Endothelial cell of umbilical vein (primary cell): ENCODE measurements at regions of chr12 and their contacts with region 1.

Region 1: GRCh38 chr12:54935235-54935951 is 49.2 kb downstream of the TESPA1 start:
- DNase-seq: peak; percentile 67
- H3K4me3 ChIP-seq: no peak overlapping the region
- H3K27ac ChIP-seq: peak overlapping the region; percentile 88
- H3K4me1 ChIP-seq: peaks cover 27% of the 10 kb centered on the region
- H3K27me3 ChIP-seq: no peaks in the 10 kb centered on the region
- CTCF ChIP-seq: no peak
- POLR2A ChIP-seq: no peak

Region 2: DNA sequence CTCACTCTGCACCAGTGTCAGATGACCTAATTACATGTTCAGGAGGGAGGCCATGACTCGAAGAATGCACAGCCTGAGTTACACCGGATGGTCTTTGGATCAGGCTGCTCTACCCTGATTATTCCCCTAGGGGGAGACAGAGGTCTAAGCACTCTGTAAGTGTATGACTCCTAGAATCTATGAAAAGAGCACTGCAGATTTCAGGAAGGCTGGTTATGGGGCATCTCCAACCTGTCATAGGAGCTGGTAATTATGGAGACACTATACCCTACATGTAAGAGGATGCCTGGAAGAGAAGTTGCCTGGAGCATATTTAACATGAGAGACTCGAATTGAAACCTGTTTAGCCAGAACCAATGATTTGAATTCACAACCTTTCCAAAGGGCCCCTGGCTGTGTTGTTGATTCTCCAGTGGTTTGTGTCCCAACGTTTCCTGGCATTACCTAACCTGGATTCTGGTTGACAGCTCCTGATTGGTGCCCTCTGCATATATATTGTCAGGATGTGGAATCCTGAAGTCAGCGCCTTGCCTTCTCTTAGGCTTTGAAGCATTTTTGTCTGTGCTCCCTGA is 81.3 kb before region 1 on chr12 and contains the start of gene MUCL1:
- CTCF ChIA-PET with region 1: no interaction called
- POLR2A ChIA-PET with region 1: no interaction called
- dilution Hi-C with region 1: no loop called
- intact Hi-C with region 1: loop called (anchors 1 kb)
- DNase-seq: peak; percentile 69
- H3K4me3 ChIP-seq: no peak within 1 kb of the TSS
- H3K27ac ChIP-seq: no peak within 1 kb of the TSS
- H3K4me1 ChIP-seq: no peaks in the 10 kb centered on the region
- H3K27me3 ChIP-seq: peaks cover 3 to 11% of the 10 kb centered on the region in 2 experiments
- CTCF ChIP-seq: peak; percentile 73 to 81
- POLR2A ChIP-seq: no peak
- total RNA-seq, gene MUCL1: not detected in 2 replicates